ENCODE measurements at regions of chr17 and their contacts with region 1.

Region 1: DNA sequence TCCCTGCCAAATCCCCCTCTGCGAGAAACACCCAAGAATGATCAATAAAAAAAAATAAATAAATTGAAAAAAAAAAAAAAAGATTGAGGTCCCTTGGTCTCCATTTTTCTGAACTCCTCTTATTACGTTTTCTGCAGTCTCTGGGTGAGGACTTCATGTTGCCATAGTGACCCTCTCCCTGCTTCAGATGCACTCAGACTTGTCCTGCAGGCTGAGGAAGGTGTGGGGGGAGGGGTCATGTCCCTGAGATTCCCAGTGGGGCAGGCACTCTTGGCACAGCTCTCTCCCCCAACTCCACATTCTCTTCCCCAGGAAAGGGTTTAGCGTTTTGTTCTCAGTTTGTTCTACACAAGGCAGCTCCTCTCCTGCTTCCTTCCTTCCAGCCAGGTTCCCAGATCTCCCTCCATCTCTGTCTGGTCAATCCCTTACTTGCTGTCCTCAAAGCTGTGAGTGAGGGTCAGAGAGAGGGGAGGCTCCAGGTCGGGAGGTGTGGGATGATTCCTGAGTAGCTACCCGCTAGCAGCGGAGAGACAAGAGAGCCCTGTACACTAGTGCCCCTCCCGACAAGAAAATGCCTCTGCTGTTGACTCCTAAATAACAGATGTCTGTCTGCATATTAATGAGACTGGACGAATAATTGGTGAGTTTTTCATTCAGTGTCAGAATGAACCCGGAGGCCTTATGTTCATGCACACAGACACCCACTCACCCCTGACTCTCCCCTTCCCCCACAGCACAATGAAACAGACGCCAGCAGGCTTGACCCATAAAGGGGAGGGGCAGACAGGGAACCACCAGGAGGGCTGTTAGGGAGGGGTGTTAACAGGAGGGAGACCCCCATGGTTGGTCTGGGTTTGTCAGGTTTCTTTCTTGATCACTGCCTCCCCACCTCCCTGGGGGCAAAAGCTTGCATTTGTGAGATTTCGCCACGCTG is 9.2 kb downstream of the RND2 start:
- DNase-seq: no peak
- ATAC-seq: no peak
- H3K4me3 ChIP-seq: no peak overlapping the region
- H3K27ac ChIP-seq: no peak overlapping the region
- H3K4me1 ChIP-seq: no peaks in the 10 kb centered on the region
- H3K27me3 ChIP-seq: no peaks in the 10 kb centered on the region
- CTCF ChIP-seq: no peak

Region 2: DNA sequence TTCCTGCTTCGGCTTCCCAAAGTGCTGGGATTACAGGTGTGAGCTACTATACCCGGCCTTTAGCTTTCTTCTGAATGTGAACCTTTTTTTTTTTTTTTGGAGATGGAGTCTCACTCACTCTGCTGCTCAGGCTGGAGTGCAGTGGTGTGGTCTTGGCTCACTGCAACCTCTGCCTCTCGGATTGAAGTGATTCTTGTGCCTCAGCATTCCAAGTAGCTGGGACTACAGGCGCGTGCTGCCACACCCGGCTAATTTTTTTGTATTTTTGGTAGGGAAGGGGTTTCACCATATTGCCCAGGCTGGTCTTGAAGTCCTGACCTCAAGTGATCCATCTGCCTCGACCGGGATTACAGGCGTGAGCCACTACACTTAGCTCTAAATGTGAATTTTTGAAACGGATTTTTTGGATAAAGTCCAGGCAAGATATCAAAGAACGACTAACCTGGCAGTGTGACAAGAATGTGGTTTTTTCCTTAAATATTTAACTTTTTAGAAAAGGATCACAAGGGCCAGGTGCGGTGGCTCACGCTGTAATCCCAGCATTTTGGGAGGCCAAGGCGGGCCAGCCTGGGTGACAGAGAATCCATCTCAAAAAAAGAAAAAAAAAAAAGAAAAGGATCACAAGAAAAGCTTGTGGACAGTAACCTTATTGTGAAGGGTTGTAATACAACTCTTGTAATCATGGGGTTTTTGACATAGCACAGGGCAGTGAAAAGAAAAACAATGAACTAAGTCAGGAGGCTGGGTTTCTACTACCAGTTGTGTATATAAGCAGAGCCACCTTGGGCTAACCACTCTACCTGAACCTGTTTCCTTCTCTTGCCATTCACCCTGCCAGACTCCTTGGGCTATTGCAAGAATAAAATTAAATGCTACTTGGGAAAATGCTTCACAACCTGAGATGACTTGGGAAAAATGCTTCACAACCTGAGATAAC is 84.7 kb after region 1 on chr17:
- intact Hi-C with region 1: loop called in 6 of 10 experiments (anchors 10 kb)
- DNase-seq: no peak
- ATAC-seq: no peak
- H3K4me3 ChIP-seq: no peak overlapping the region
- H3K27ac ChIP-seq: no peak overlapping the region
- H3K4me1 ChIP-seq: peaks cover 0 to 4% (median 0%) of the 10 kb centered on the region in 9 donors
- H3K27me3 ChIP-seq: no peaks in the 10 kb centered on the region
- CTCF ChIP-seq: no peak

Region 3: GRCh38 chr17:43155666-43156065 is 121.5 kb after region 1 on chr17:
- intact Hi-C with region 1: no loop called
- DNase-seq: no peak
- ATAC-seq: no peak
- H3K4me3 ChIP-seq: no peak overlapping the region
- H3K27ac ChIP-seq: no peak overlapping the region
- H3K4me1 ChIP-seq: no peaks in the 10 kb centered on the region
- H3K27me3 ChIP-seq: no peaks in the 10 kb centered on the region
- CTCF ChIP-seq: no peak

Region 4: DNA sequence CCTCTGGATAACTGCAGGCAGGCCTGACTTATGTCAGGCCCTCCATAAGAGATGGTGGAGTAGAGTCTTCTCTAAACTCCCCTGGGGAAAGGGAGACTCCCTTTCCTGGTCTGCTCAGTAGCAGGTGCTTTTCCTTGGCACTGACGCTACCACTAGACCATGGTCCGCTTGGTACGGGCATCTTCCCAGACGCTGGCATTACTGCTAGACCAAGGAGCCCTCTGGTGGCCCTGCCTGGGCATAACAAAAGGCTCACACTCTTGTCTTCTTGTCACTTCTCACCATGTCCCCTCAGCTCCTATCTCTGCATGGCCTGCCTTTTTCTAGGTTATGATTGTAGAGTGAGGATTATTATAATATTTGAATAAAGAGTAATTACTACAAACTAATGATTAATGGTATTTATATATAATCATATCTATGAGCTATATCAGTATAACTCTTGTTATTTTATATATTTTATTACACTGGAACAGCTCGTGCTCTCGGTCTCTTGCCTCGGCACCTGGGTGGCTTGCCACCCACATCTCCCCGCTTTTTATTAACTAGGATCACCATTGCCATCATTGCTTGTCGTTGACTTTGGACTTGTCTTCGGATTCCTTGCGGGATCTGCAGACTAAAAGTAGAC is 304.8 kb after region 1 on chr17:
- intact Hi-C with region 1: loop called in 3 of 10 experiments (anchors 10 kb)
- DNase-seq: peak; percentile 70
- ATAC-seq: no peak
- H3K4me3 ChIP-seq: no peak overlapping the region
- H3K27ac ChIP-seq: no peak overlapping the region
- H3K4me1 ChIP-seq: peaks cover 0 to 44% (median 27%) of the 10 kb centered on the region in 9 donors
- H3K27me3 ChIP-seq: no peaks in the 10 kb centered on the region
- CTCF ChIP-seq: peak; percentile 50 to 88 (median 72)

Measured in heart right ventricle (tissue), 16 donors.